Dorsolateral prefrontal cortex (tissue), 120 donors: ENCODE measurements at regions of chr7 and their contacts with region 1.

Region 1: DNA sequence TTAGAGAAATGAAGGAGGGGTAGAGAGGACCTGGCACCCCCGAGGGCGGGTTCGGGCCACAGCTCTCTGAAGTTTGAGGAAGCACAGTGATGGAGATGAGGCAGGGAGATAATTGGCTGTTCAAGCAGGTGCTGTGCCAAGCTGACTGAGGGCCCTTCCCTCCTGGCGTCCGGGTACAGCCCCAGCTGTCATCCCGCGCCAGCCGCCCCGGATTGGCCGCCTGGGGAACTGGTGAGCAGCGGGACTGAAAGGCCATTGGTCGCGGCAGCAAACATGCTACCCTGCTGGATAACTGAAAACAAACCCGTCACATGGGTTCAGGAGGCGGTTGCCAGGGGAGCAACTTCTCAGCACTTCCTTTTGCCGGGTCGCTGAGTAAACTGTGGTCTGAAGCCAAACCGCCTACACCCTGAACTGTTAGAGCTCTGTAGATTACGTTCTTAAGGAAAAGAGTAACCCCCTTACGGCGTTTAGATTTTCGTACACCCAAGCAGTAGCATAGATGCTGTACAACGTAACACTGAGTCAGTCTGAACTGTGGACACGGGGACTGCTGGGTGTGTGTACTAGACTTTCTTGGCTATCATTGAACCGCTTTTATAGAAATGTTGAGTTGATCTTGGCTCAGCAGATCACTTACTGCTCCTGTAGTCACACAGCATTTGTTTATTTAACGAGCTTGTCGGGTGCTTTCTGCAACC is 1.3 kb downstream of the INSIG1 start:
- DNase-seq: peak; percentile 98 to 99 (median 99)
- H3K4me3 ChIP-seq: peak overlapping the region; percentile 74 to 100 (median 93)
- H3K27ac ChIP-seq: peak overlapping the region; percentile 89 to 100 (median 99)
- H3K27me3 ChIP-seq: no peaks in the 10 kb centered on the region
- CTCF ChIP-seq: peak in 27 of 56 donors; percentile 12 to 45 (median 25)

Region 2: GRCh38 chr7:155003376-155004214 is 295.4 kb before region 1 on chr7:
- intact Hi-C with region 1: loop called (anchors 5 kb)
- DNase-seq: peak; percentile 42 to 92 (median 66)
- H3K4me3 ChIP-seq: peak overlapping the region; percentile 55 to 100 (median 96)
- H3K27ac ChIP-seq: peak overlapping the region in 58 of 59 donors; percentile 68 to 99 (median 94)
- H3K27me3 ChIP-seq: no peaks in the 10 kb centered on the region
- CTCF ChIP-seq: peak in 24 of 56 donors; percentile 5 to 46 (median 18)

Region 3: GRCh38 chr7:155227981-155228811 is 70.8 kb before region 1 on chr7:
- intact Hi-C with region 1: loop called in 1 of 2 experiments (anchors 2 kb)
- DNase-seq: no peak
- H3K4me3 ChIP-seq: no peak overlapping the region
- H3K27ac ChIP-seq: no peak overlapping the region
- H3K27me3 ChIP-seq: peaks cover 0 to 8% (median 0%) of the 10 kb centered on the region in 45 donors
- CTCF ChIP-seq: no peak

Region 4: DNA sequence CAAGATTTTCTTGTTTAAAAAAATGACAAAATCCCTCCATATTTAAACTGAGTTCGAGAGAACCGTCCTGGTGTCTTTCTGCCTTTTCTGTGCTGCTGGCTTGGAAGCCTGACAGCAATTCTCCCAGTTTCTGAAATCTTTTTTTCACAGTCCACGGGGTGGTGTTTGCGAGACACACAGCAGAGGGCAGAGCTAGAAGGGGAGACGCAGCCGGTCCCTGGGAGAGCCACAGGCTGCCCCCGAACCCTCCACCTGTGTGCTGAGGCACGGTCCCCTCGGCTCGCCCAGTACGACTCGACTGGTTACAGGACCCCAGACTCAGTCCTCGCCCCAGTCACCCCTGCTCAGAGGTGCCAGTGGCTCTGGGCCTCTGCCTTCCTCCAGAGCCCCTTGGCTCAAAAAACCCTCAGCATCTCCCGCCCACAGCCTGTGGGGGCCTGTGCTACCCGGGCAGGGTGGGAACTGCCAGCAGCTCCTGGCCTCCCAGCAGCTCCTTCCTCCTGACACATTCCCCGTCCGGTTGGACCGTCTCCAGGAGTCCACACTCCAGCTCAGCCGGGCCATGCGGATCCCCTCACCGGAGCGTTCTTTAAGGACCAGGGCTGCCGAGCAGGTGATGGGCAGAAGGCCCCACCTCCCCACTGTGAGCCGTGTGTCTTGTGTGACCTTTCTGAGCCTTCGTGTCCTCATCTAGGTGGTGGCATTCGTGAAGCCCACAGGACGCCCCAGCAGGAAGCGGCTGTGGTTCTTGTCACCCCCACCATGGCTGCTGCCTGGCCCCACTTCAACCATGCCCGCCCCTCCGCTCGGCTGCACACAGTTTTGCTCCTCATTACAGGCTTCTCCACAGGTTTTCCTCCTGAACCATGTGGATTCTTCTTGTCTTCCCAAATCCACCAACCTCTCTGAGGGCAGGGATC is 106.7 kb after region 1 on chr7:
- intact Hi-C with region 1: loop called in 1 of 2 experiments (anchors 5 kb)
- DNase-seq: peak in 3 of 10 donors; percentile 19 to 71 (median 36)
- H3K4me3 ChIP-seq: peak overlapping the region in 4 of 59 donors; percentile 37 to 75 (median 66)
- H3K27ac ChIP-seq: peak overlapping the region in 7 of 59 donors; percentile 46 to 97 (median 84)
- H3K27me3 ChIP-seq: peaks cover 0 to 78% (median 43%) of the 10 kb centered on the region in 45 donors
- CTCF ChIP-seq: peak in 37 of 56 donors; percentile 9 to 73 (median 38)

Region 5: DNA sequence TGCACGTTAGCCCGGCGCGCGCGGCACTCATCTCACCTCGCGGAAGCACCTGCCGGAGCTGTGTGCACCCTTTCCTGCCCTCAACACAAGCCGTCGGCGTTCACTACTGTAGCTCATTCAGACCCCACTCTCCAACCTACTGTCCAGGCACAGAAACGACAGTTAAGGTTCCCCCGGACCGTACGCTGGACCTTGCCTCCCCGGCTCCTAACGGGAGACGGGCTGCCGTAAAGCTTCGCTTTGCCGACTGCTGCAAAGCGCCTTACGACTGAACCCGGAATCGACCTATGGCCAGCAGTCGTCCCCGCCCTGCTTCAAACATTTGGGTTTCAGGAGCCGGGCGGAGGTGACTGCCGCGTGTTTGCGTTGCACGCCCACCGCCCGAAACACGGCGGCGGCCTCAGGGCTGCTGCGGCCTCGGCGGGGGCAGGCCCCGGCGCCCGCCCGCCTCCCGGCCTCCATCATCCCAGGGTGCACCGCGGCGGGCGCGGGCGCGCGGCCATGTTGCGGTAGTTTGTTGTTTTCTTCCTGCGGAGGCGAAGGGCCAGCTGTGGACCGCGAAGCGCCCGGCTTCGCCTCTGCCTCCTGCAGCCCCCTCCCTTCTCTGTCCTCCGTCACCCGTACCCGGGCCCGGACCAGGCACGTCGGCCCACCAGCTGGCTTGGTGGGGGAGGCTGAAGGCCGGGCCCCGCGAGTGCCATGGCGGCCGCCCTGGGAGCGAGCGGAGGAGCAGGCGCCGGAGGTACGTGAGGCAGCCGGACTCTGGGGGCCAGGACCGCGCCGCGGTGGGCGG is 345.4 kb after region 1 on chr7 and contains the start of gene RBM33:
- intact Hi-C with region 1: loop called in 1 of 2 experiments (anchors 10 kb)
- DNase-seq: peak; percentile 63 to 84 (median 74)
- H3K4me3 ChIP-seq: peak within 1 kb of the TSS; percentile 78 to 100 (median 97)
- H3K27ac ChIP-seq: peak within 1 kb of the TSS; percentile 71 to 99 (median 94)
- H3K27me3 ChIP-seq: no peaks in the 10 kb centered on the region
- CTCF ChIP-seq: peak in 23 of 56 donors; percentile 1 to 61 (median 27)
- total RNA-seq, gene RBM33: 60.5 to 127 (median 90.5) TPM